Activated CD4-positive, alpha-beta T cell treated with anti-CD3 and anti-CD28 coated beads, Interleukin-2, amount 10 ng/mL, durations not matched to agents 24 days and 14 days (primary cell): ENCODE measurements at regions of chr17 and their contacts with region 1.

Region 1: GRCh38 chr17:49390548-49391324 is 23.9 kb downstream of the PHB1 start:
- DNase-seq: peak; percentile 60
- H3K4me3 Mint-ChIP-seq: peak overlapping the region; percentile 50
- H3K27ac Mint-ChIP-seq: peak overlapping the region; percentile 80
- H3K4me1 Mint-ChIP-seq: peaks cover 58% of the 10 kb centered on the region
- H3K27me3 Mint-ChIP-seq: no peaks in the 10 kb centered on the region

Region 2: DNA sequence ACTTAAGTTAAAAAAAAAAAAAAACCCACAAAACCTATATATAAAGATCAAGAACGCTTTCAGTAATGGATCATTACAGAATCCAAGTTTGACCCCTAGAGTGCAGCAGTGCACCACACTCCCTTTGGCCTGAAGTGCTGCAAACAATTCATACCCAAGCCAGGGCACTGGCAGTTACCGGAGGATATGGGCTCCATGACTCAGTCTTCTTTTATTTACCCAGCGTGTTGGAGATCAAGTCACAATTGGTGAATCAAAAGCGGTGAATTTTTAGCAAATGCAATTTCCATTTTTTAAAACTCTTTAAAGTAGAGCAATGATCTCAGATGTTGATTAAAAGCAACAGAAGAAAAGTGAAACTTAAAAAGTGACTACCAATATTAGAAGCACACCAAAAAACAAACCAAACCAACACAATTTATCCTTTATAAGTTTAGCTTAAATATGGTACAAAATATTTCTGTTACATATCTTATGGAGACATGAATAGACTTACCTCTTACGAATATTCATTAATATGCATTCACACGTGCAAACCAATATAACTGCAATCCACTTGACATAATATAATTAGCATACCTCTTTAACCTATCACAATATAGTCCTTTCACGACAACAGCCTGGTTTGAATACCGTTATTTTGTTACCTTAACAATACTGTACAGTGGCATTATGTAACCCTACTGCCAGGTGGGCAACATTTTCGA is 75.0 kb before region 1 on chr17:
- intact Hi-C with region 1: loop called (anchors 1 kb)
- DNase-seq: peak; percentile 93
- H3K4me3 Mint-ChIP-seq: peak overlapping the region; percentile 69
- H3K27ac Mint-ChIP-seq: peak overlapping the region; percentile 63
- H3K4me1 Mint-ChIP-seq: peaks cover 19% of the 10 kb centered on the region
- H3K27me3 Mint-ChIP-seq: no peaks in the 10 kb centered on the region